Caco-2 (cell line): ENCODE measurements at regions of chr3 and their contacts with region 1.

Region 1: DNA sequence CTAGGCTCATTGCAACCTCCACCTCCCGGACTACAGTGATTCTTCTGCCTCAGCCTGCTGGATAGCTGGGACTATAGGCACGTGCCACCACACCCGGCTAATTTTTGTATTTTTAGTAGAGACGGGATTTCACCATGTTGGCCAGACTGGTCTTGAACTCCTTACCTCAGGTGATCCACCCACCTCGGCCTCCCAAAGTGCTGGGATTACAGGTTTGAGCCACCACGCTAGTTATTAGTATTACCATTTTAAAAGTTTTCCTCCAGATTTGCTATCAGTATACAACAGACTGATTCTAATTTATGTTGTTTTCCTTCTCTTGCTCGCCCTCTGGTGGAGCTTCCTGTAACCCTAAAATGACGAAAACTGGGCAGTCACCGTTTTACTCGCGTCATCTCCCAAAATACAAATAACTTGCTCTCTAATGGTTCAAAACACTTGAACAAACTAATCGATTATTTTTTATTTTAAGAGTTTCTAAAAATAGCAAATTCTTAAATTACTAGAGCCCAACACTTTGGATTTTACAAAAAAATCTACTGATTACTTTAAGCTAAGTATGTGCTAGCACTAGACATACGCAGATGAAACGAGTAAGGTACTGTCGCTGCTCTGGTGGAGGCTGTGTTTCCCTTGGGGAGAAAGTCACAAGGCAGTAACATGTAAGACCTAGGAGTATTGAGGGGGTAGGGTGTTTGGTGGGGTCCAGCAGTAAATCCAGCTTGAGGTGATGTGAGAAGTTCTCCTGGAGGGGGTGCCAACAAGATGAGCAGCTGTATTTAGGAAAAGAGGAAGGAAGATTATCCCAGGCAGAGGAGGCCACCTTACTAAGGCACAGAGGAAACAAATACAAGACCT is 203.3 kb downstream of the MBNL1 start:
- DNase-seq: peak in 1 of 2 experiments; percentile 49
- H3K4me3 ChIP-seq: no peak overlapping the region
- H3K4me3 Mint-ChIP-seq: no peak overlapping the region
- H3K27ac Mint-ChIP-seq: no peak overlapping the region
- H3K4me1 ChIP-seq: no peaks in the 10 kb centered on the region; the same call in 1 of the 2 replicates
- H3K4me1 Mint-ChIP-seq: peaks cover 6% of the 10 kb centered on the region
- H3K27me3 ChIP-seq: no peaks in the 10 kb centered on the region
- H3K27me3 Mint-ChIP-seq: no peaks in the 10 kb centered on the region
- CTCF ChIP-seq: peak; percentile 64 to 68

Region 2: GRCh38 chr3:152071924-152072323 is 400.1 kb before region 1 on chr3:
- CTCF ChIA-PET with region 1: no interaction called
- POLR2A ChIA-PET with region 1: no interaction called
- intact Hi-C with region 1: loop called (anchors 1 kb)
- DNase-seq: peak in 1 of 2 experiments; percentile 14
- H3K4me3 ChIP-seq: no peak overlapping the region
- H3K4me3 Mint-ChIP-seq: no peak overlapping the region
- H3K27ac Mint-ChIP-seq: no peak overlapping the region
- H3K4me1 ChIP-seq: no peaks in the 10 kb centered on the region
- H3K4me1 Mint-ChIP-seq: no peaks in the 10 kb centered on the region
- H3K27me3 ChIP-seq: no peaks in the 10 kb centered on the region
- H3K27me3 Mint-ChIP-seq: no peaks in the 10 kb centered on the region
- CTCF ChIP-seq: peak; percentile 18 to 32

Region 3: GRCh38 chr3:152183473-152183872 is 288.6 kb before region 1 on chr3:
- CTCF ChIA-PET with region 1: interaction called, 3 read pairs
- POLR2A ChIA-PET with region 1: no interaction called
- intact Hi-C with region 1: loop called (anchors 1 kb)
- DNase-seq: peak; percentile 53 to 55
- H3K4me3 ChIP-seq: no peak overlapping the region
- H3K4me3 Mint-ChIP-seq: no peak overlapping the region
- H3K27ac Mint-ChIP-seq: no peak overlapping the region
- H3K4me1 ChIP-seq: no peaks in the 10 kb centered on the region
- H3K4me1 Mint-ChIP-seq: no peaks in the 10 kb centered on the region
- H3K27me3 ChIP-seq: no peaks in the 10 kb centered on the region
- H3K27me3 Mint-ChIP-seq: no peaks in the 10 kb centered on the region
- CTCF ChIP-seq: peak; percentile 34 to 71

Region 4: DNA sequence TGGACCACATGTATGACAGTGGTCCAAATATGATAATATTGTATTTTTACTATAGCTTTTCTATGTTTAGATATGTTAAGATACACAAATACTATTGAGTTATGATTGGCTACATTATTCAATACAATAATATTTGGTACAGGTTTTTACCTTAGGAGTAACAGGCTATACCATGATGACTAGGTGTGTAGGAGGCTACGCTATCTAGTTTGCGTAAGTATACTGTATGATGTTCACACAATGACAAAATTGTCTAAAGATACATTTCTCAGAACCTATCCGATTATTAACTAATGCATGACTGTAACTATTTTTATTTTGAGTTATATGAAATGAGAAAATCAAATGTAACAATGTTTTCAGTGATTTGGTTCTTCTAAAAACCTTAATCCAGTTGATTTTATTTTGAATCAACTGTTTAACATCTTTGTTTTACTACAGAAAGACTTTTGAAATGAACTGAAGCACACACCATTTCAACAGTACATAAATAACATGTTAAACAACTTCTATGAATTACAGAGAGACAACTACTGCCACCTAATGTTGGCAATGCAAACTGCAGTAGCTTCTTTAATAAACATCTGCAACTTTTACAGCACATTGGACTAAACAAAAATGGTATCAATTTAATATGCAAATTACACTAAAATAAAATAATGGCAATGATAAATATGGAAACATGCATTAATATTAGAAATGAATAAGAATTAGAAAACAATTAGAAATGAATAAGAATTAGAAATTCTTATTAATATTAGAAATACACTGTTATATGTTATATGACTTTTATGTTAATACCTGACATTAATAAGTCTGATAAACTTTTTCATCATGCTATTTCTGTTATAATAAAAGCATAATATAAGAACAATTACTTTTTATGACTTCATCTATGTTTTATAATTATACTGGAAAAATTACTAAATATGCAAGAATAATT is 52.4 kb after region 1 on chr3:
- CTCF ChIA-PET with region 1: interaction called, 4 read pairs
- POLR2A ChIA-PET with region 1: no interaction called
- intact Hi-C with region 1: loop called (anchors 1 kb)
- DNase-seq: peak in 1 of 2 experiments; percentile 42
- H3K4me3 ChIP-seq: no peak overlapping the region
- H3K4me3 Mint-ChIP-seq: no peak overlapping the region
- H3K27ac Mint-ChIP-seq: no peak overlapping the region
- H3K4me1 ChIP-seq: no peaks in the 10 kb centered on the region
- H3K4me1 Mint-ChIP-seq: no peaks in the 10 kb centered on the region
- H3K27me3 ChIP-seq: no peaks in the 10 kb centered on the region
- H3K27me3 Mint-ChIP-seq: no peaks in the 10 kb centered on the region
- CTCF ChIP-seq: peak; percentile 44 to 73

Region 5: DNA sequence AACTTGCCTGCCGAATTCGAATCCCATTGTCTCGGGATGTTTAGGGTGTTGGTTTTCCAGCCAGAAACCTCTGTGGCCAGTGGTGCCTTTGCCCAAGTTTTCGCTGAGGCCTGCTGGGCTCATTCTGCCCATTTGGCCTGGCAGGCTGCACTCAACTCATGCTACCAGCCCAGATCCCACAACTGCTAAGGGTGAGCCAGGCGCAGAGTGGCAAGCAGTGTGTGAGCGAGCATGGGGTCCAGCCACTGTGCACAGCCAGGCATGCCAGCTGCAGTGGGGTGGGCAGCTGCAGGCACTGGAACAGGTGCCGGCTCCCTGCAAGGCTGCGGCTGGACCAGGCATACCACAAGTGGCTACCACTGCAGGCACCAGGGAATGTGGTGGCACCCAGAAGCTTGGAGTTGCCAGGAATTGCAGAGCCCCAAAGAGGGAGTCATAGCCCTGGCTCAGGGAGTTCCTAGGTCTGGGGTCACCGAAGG is 211.5 kb after region 1 on chr3:
- CTCF ChIA-PET with region 1: no interaction called
- POLR2A ChIA-PET with region 1: no interaction called
- intact Hi-C with region 1: no loop called
- DNase-seq: no peak
- H3K4me3 ChIP-seq: no peak overlapping the region
- H3K4me3 Mint-ChIP-seq: no peak overlapping the region
- H3K27ac Mint-ChIP-seq: no peak overlapping the region
- H3K4me1 ChIP-seq: no peaks in the 10 kb centered on the region
- H3K4me1 Mint-ChIP-seq: no peaks in the 10 kb centered on the region
- H3K27me3 ChIP-seq: no peaks in the 10 kb centered on the region
- H3K27me3 Mint-ChIP-seq: peaks cover 7% of the 10 kb centered on the region
- CTCF ChIP-seq: no peak

Region 6: DNA sequence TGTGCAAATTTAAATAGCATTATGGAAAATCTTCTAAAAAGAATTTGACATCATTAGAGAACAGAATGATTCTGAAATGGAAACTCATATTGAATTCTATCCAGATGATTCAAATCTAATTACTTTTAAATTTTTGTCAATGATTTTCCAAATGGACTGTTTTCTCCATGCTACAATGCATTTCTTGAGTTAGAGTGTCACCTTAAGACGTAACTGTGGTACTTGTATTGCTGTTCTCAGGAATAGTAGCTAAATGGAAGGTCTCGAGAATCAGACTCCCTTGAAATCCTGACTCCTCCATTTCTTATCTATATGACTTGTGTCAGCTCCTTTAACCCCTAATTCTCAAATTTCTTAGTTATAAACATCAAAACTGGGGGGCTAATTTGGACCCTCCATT is 465.2 kb after region 1 on chr3:
- CTCF ChIA-PET with region 1: no interaction called
- POLR2A ChIA-PET with region 1: no interaction called
- intact Hi-C with region 1: loop called (anchors 1 kb)
- DNase-seq: no peak
- H3K4me3 ChIP-seq: no peak overlapping the region
- H3K4me3 Mint-ChIP-seq: no peak overlapping the region
- H3K27ac Mint-ChIP-seq: no peak overlapping the region
- H3K4me1 ChIP-seq: peaks cover 8% of the 10 kb centered on the region; the same call in 1 of the 2 replicates
- H3K4me1 Mint-ChIP-seq: peaks cover 14% of the 10 kb centered on the region
- H3K27me3 ChIP-seq: no peaks in the 10 kb centered on the region
- H3K27me3 Mint-ChIP-seq: no peaks in the 10 kb centered on the region
- CTCF ChIP-seq: peak in 1 of 2 experiments; percentile 15

Region 7: DNA sequence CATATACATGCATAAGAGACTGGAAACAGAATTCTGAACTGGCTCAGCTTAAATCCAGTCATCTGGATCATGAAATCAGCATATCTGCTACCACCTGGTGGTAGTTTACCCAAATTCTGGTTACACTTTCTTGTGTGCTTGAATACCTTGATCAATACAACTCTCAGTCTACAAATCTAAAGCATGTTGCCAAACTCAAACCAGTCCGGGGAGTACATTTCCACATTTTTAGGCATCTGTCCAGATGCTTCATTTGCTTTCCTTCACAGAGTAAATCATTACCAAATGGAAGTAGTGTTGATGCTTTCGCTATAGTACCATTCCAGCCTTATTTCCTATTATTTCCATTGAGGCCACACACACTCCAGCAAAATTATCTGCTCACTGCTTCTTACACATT is 489.3 kb after region 1 on chr3:
- CTCF ChIA-PET with region 1: no interaction called
- POLR2A ChIA-PET with region 1: no interaction called
- intact Hi-C with region 1: loop called (anchors 1 kb)
- DNase-seq: peak in 1 of 2 experiments; percentile 37
- H3K4me3 ChIP-seq: no peak overlapping the region
- H3K4me3 Mint-ChIP-seq: no peak overlapping the region
- H3K27ac Mint-ChIP-seq: no peak overlapping the region
- H3K4me1 ChIP-seq: peaks cover 27% of the 10 kb centered on the region
- H3K4me1 Mint-ChIP-seq: peaks cover 6% of the 10 kb centered on the region
- H3K27me3 ChIP-seq: no peaks in the 10 kb centered on the region
- H3K27me3 Mint-ChIP-seq: no peaks in the 10 kb centered on the region
- CTCF ChIP-seq: peak; percentile 39 to 46